CD4-positive, alpha-beta memory T cell (primary cell): ENCODE measurements at regions of chr19 and their contacts with region 1.

Region 1: GRCh38 chr19:34662919-34663318 is 14.0 kb downstream of the SCGB2B2 start:
- DNase-seq: peak; percentile 51 to 66 (median 60)
- H3K4me3 ChIP-seq: no peak overlapping the region
- H3K4me3 Mint-ChIP-seq: peak overlapping the region in 4 of 8 donors; percentile 2 to 70 (median 18)
- H3K27ac ChIP-seq: no peak overlapping the region
- H3K27ac Mint-ChIP-seq: peak overlapping the region in 4 of 7 donors; percentile 41 to 74 (median 70)
- H3K4me1 ChIP-seq: peaks cover 23% of the 10 kb centered on the region
- H3K4me1 Mint-ChIP-seq: peaks cover 15 to 31% (median 20%) of the 10 kb centered on the region in 4 donors
- H3K27me3 ChIP-seq: no peaks in the 10 kb centered on the region
- H3K27me3 Mint-ChIP-seq: peaks cover 0 to under 1% of the 10 kb centered on the region in 2 donors

Region 2: DNA sequence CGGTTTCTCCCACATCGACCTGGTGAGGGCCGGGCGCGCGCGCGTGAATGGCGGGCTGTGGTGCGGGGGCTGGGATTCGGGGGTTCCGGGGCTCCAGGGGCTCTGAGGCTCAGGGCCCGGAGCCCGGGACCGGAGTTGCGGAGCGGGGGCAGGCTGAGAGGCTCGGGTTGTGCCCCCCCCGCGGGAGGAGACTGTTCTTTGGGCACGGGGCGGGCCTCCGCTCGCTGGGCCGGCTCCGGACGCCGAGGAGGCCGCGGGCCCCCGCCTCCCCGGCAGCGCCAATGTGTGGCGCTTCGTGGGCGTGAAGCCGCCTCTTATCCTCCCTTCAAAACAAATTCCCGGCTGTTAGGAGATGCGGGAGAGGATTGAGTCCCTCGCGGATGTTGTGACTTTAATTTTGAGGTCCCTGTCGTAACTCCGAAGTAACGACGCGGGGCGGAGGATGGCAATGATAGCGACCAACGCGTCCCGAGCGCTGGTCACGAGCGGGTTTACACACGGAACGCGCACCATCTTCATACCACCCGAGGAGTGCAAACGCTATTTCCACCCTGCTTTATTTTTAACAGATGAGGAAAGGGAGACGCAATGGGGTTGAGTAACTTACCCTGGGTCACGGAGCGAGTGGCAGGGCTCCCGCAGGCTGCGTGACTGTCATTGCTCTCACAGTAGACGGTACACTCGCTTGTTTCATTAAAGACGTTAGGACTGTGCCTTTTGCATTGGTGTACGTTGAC is 234.2 kb before region 1 on chr19:
- CTCF ChIA-PET with region 1: no interaction called
- POLR2A ChIA-PET with region 1: no interaction called
- intact Hi-C with region 1: no loop called
- DNase-seq: peak in 1 of 5 donors; percentile 23
- H3K4me3 ChIP-seq: peak overlapping the region; percentile 72 to 84
- H3K4me3 Mint-ChIP-seq: peak overlapping the region; percentile 96 to 98 (median 97)
- H3K27ac ChIP-seq: peak overlapping the region; percentile 93
- H3K27ac Mint-ChIP-seq: peak overlapping the region; percentile 93 to 98 (median 96)
- H3K4me1 ChIP-seq: peaks cover 38% of the 10 kb centered on the region
- H3K4me1 Mint-ChIP-seq: peaks cover 20 to 42% (median 31%) of the 10 kb centered on the region in 4 donors
- H3K27me3 ChIP-seq: no peaks in the 10 kb centered on the region
- H3K27me3 Mint-ChIP-seq: no peaks in the 10 kb centered on the region

Region 3: DNA sequence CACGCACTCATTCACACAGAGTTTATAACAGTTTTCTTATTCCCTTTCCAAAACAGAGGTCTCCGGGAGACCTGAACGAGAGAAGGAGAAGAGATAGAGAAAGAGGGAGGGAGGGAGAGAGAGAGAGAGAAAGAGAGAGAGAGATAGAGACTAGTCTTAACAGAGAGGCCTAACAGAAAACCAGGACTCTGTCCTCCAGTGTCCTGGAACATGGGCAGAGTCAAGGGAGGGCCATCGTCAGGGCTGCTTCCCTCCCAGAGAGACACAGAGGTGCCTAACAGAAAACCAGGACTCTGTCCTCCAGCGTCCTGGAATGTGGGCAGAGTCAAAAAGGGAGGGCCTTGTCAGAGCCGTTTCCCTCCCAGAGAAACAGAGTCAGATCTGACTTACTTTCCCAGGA is 102.7 kb before region 1 on chr19:
- CTCF ChIA-PET with region 1: no interaction called
- POLR2A ChIA-PET with region 1: no interaction called
- intact Hi-C with region 1: no loop called
- DNase-seq: no peak
- H3K4me3 ChIP-seq: no peak overlapping the region
- H3K4me3 Mint-ChIP-seq: no peak overlapping the region
- H3K27ac ChIP-seq: no peak overlapping the region
- H3K27ac Mint-ChIP-seq: no peak overlapping the region
- H3K4me1 ChIP-seq: no peaks in the 10 kb centered on the region
- H3K4me1 Mint-ChIP-seq: no peaks in the 10 kb centered on the region
- H3K27me3 ChIP-seq: no peaks in the 10 kb centered on the region
- H3K27me3 Mint-ChIP-seq: peaks cover 13 to 23% of the 10 kb centered on the region in 2 donors

Region 4: DNA sequence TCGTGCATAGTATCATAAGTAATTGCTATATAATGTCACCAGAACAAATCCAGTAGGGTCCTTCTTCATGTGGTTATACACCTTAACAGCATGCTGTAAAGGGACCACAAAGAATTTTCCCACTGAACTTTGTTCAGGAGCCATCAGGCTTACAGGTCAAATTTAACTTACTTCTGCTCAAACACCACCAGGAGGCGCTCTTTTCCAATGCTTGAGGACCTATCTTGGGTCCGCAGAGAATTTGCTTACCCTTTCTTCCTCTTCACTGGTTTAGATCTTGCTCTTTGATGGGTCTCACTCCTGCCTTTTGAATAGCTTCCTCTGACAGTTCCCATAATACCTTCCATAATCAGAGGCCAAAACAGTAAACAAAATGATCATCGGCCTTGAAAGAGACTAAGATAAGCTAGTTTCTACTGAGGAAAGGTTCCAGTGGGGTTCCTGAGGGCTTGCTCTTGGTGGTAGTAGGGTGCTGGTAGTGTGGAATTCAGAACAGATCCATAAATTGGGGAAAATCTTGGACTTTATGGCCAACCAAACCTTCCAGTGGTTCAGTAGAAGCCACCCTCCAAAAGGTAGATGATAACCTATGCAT is 23.3 kb before region 1 on chr19:
- CTCF ChIA-PET with region 1: interaction called, 7 read pairs
- POLR2A ChIA-PET with region 1: no interaction called
- intact Hi-C with region 1: loop called (anchors 1 kb)
- DNase-seq: peak; percentile 52 to 66 (median 62)
- H3K4me3 ChIP-seq: no peak overlapping the region
- H3K4me3 Mint-ChIP-seq: no peak overlapping the region
- H3K27ac ChIP-seq: no peak overlapping the region
- H3K27ac Mint-ChIP-seq: no peak overlapping the region
- H3K4me1 ChIP-seq: no peaks in the 10 kb centered on the region
- H3K4me1 Mint-ChIP-seq: peaks cover 0 to 3% (median 0%) of the 10 kb centered on the region in 4 donors
- H3K27me3 ChIP-seq: no peaks in the 10 kb centered on the region
- H3K27me3 Mint-ChIP-seq: no peaks in the 10 kb centered on the region

Region 5: GRCh38 chr19:34677386-34678084 is 14.6 kb after region 1 on chr19 and contains the start of gene ZNF302:
- CTCF ChIA-PET with region 1: interaction called, 9 read pairs
- POLR2A ChIA-PET with region 1: interaction called, 23 read pairs
- intact Hi-C with region 1: loop called (anchors 2 kb)
- DNase-seq: peak; percentile 93 to 95 (median 94)
- H3K4me3 ChIP-seq: peak within 1 kb of the TSS; percentile 73 to 94
- H3K4me3 Mint-ChIP-seq: peak within 1 kb of the TSS; percentile 95 to 100 (median 99)
- H3K27ac ChIP-seq: peak within 1 kb of the TSS; percentile 89
- H3K27ac Mint-ChIP-seq: peak within 1 kb of the TSS; percentile 97 to 100 (median 99)
- H3K4me1 ChIP-seq: peaks cover 21% of the 10 kb centered on the region
- H3K4me1 Mint-ChIP-seq: peaks cover 18 to 41% (median 23%) of the 10 kb centered on the region in 4 donors
- H3K27me3 ChIP-seq: no peaks in the 10 kb centered on the region
- H3K27me3 Mint-ChIP-seq: peaks cover 0 to 6% of the 10 kb centered on the region in 2 donors
- total RNA-seq, gene ZNF302: 50.8 to 53.3 TPM

Region 6: DNA sequence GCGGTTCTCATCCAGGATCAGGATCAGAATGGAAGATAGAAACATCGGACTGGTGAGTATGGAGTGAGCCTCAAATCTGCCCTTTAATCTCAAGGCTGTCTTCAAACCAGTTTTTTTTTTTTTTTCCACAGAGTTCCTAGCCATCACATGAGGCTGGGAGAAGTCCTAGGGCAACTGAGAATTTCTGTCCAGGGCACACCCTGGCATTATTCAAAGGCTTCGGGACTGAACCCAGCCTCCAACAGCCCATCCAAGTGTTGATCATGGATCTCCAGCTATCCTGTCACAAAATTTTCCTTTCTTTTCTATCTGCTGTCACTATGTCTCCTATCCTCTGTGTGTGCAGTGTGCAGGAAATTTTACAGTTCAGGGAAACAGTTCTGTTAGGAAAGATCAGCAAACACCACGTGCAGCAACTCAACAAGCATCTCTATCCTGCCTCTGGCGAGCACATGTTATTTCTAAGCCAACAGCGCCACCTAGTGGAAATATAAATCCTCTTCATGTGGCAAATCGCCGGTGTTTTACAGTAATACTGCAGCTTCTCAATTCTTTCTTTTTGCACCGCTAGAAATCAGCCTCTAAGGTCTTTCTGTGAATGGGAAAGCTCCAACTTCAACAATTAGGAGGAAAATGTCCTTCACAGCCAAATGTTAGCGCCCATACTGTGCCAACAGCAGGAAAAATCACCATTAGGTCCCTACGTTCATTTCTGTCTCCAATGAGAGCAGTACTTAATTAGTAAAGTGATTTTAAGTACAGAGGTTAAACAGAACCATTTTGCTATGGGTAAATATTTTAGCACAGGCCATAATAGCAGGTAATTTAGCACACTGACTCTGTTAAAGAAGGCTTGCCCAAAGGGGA is 49.7 kb after region 1 on chr19:
- CTCF ChIA-PET with region 1: no interaction called
- POLR2A ChIA-PET with region 1: no interaction called
- intact Hi-C with region 1: loop called (anchors 1 kb)
- DNase-seq: peak; percentile 64 to 74 (median 71)
- H3K4me3 ChIP-seq: no peak overlapping the region
- H3K4me3 Mint-ChIP-seq: no peak overlapping the region
- H3K27ac ChIP-seq: no peak overlapping the region
- H3K27ac Mint-ChIP-seq: no peak overlapping the region
- H3K4me1 ChIP-seq: no peaks in the 10 kb centered on the region
- H3K4me1 Mint-ChIP-seq: peaks cover 0 to 1% (median under 1%) of the 10 kb centered on the region in 4 donors
- H3K27me3 ChIP-seq: no peaks in the 10 kb centered on the region
- H3K27me3 Mint-ChIP-seq: peaks cover 15 to 17% of the 10 kb centered on the region in 2 donors

Region 7: DNA sequence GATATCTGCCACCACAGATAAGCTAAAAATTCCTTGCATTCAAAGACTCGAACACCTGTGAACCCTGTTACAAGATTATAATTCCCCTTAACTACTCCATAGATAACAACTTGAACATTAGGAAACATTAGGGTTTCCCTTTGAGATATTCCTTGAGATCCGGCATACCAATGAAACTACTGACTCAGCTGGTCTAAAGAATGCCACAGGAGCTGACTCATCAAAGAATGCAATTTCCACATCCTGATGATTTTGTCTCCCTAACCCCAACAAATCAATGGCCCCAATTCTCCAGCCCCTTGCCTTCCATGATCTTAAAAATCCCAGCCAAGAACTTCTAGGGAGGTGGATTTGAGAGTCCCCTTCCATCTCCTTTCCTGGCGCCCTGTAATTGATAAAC is 145.6 kb after region 1 on chr19:
- CTCF ChIA-PET with region 1: no interaction called
- POLR2A ChIA-PET with region 1: no interaction called
- intact Hi-C with region 1: no loop called
- DNase-seq: no peak
- H3K4me3 ChIP-seq: no peak overlapping the region
- H3K4me3 Mint-ChIP-seq: peak overlapping the region in 1 of 8 donors; percentile 27
- H3K27ac ChIP-seq: no peak overlapping the region
- H3K27ac Mint-ChIP-seq: no peak overlapping the region
- H3K4me1 ChIP-seq: no peaks in the 10 kb centered on the region
- H3K4me1 Mint-ChIP-seq: peaks cover 0 to 4% (median 0%) of the 10 kb centered on the region in 4 donors
- H3K27me3 ChIP-seq: no peaks in the 10 kb centered on the region
- H3K27me3 Mint-ChIP-seq: peaks cover 0 to 2% of the 10 kb centered on the region in 2 donors